Activated CD8-positive, alpha-beta T cell treated with anti-CD3 and anti-CD28 coated beads, Interleukin-2, amount 10 ng/mL, durations not matched to agents 7 days and 5 days (primary cell): ENCODE measurements at regions of chr5 and their contacts with region 1.

Region 1: DNA sequence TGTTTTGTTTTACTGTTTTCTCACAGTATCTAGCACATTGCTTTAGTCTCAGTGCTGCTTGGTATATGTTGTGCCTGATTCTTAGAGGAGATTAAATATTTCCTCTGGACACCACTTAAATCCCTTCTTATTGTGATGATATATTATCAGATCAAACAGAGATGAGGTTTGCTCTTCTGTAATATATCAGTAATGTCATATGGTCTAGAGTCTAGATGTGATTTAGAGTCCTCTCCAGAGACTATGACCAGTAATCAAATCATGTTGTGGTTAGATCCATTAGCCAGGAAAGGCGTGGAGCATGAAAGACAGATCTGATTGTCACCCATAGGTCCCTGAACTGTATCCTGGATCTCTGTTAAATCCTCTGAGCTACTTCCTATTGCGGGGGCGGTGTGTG is 24.4 kb downstream of the CAMK4 start:
- DNase-seq: no peak
- ATAC-seq: no peak
- H3K4me3 Mint-ChIP-seq: no peak overlapping the region
- H3K27ac Mint-ChIP-seq: no peak overlapping the region
- H3K4me1 Mint-ChIP-seq: peaks cover 75% of the 10 kb centered on the region
- H3K27me3 Mint-ChIP-seq: no peaks in the 10 kb centered on the region

Region 2: GRCh38 chr5:111229871-111230810 is 18.4 kb before region 1 on chr5:
- CTCF ChIA-PET with region 1: interaction called, 41 read pairs
- POLR2A ChIA-PET with region 1: interaction called, 45 read pairs
- DNase-seq: no peak
- ATAC-seq: peak; percentile 38
- H3K4me3 Mint-ChIP-seq: peak overlapping the region; percentile 79
- H3K27ac Mint-ChIP-seq: peak overlapping the region; percentile 98
- H3K4me1 Mint-ChIP-seq: peaks cover 66% of the 10 kb centered on the region
- H3K27me3 Mint-ChIP-seq: no peaks in the 10 kb centered on the region

Region 3: GRCh38 chr5:111237470-111237869 is 11.1 kb before region 1 on chr5:
- CTCF ChIA-PET with region 1: interaction called, 31 read pairs
- POLR2A ChIA-PET with region 1: interaction called, 20 read pairs
- DNase-seq: no peak
- ATAC-seq: peak; percentile 17
- H3K4me3 Mint-ChIP-seq: peak overlapping the region; percentile 72
- H3K27ac Mint-ChIP-seq: peak overlapping the region; percentile 91
- H3K4me1 Mint-ChIP-seq: peaks cover 80% of the 10 kb centered on the region
- H3K27me3 Mint-ChIP-seq: no peaks in the 10 kb centered on the region